ENCODE measurements at regions of chr11 and their contacts with region 1.

Region 1: GRCh38 chr11:59171508-59172322 is at the start of gene DTX4:
- DNase-seq: peak; percentile 96
- H3K4me3 ChIP-seq: peak within 1 kb of the TSS; percentile 40 to 73 (median 58)
- H3K27ac ChIP-seq: peak within 1 kb of the TSS; percentile 56 to 75 (median 66)
- H3K4me1 ChIP-seq: peaks cover 0 to 20% (median 16%) of the 10 kb centered on the region in 4 donors
- H3K27me3 ChIP-seq: no peaks in the 10 kb centered on the region
- CTCF ChIP-seq: peak; percentile 77 to 91 (median 87)
- EP300 ChIP-seq: no peak
- POLR2A ChIP-seq: no peak
- total RNA-seq, gene DTX4: 3.5 to 7.8 (median 4.1) TPM

Region 2: GRCh38 chr11:59106363-59107336 is 65.1 kb before region 1 on chr11 and contains the start of gene FAM111B:
- intact Hi-C with region 1: no loop called
- DNase-seq: peak; percentile 91
- H3K4me3 ChIP-seq: peak within 1 kb of the TSS; percentile 42 to 54 (median 48)
- H3K27ac ChIP-seq: peak within 1 kb of the TSS in 3 of 4 donors; percentile 41 to 50 (median 46)
- H3K4me1 ChIP-seq: peaks cover 0 to 24% (median 21%) of the 10 kb centered on the region in 4 donors
- H3K27me3 ChIP-seq: peaks cover 0 to 10% (median 9%) of the 10 kb centered on the region in 3 donors
- CTCF ChIP-seq: no peak
- EP300 ChIP-seq: no peak
- POLR2A ChIP-seq: no peak
- total RNA-seq, gene FAM111B: 0.27 to 0.36 TPM in 2 of 4 donors, not detected in the others

Region 3: DNA sequence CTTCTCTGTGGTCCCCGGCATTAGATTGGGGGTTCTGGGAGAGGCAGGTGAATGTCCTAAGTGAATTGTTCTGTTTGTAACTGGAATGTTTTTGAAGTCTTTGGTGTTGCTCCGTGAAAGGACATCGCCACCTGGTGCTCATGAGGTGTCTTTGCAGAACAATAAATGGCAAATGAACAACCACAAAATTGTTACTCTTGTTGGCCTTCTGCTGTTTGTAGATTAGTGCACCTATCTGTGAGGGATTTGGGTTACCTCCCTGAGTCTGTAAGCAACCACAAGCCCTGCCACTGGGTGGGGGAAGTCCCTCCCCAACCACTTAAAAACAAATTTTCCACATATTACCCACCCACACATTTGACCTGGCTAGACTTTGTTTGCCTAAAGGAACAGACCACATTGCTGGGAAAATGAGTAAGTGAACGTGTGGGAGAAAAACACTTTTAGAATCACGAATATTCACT is 36.3 kb after region 1 on chr11:
- intact Hi-C with region 1: loop called (anchors 1 kb)
- DNase-seq: no peak
- H3K4me3 ChIP-seq: peak overlapping the region in 1 of 4 donors; percentile 26
- H3K27ac ChIP-seq: peak overlapping the region in 1 of 4 donors; percentile 25
- H3K4me1 ChIP-seq: no peaks in the 10 kb centered on the region
- H3K27me3 ChIP-seq: no peaks in the 10 kb centered on the region
- CTCF ChIP-seq: peak; percentile 32 to 70 (median 63)
- EP300 ChIP-seq: no peak
- POLR2A ChIP-seq: no peak

Region 4: DNA sequence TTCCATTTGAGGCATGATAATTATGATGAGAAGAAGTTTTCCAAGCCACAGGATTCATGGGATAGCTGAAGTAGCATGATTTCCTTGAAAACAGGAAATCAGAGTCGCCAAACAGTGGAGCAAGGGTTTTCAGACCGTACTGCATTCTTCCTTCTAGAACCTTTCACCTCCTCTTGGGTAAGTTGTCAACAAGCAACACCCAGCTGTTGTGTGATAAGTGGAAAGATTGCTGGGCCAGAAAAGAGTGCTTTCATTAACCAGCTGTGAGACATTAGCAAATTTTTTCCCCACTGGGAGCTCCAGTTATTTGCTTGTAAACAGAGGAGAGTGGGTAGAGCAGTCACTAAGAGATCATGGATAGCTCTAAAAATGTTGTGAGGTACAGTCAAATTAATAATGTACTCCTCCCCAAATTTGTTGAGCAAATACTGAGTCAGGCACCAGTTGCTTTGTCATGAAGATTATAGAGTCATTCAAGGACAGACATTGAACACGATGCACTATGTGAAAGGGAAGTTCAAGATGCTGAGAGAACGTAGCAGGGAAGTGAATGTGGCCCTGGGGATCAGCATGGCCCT is 52.7 kb after region 1 on chr11:
- intact Hi-C with region 1: no loop called
- DNase-seq: peak; percentile 73
- H3K4me3 ChIP-seq: no peak overlapping the region
- H3K27ac ChIP-seq: peak overlapping the region; percentile 46 to 68 (median 64)
- H3K4me1 ChIP-seq: no peaks in the 10 kb centered on the region
- H3K27me3 ChIP-seq: no peaks in the 10 kb centered on the region
- CTCF ChIP-seq: no peak
- EP300 ChIP-seq: no peak
- POLR2A ChIP-seq: no peak

Region 5: GRCh38 chr11:59283825-59284772 is 112.4 kb after region 1 on chr11:
- intact Hi-C with region 1: loop called (anchors 1 kb)
- DNase-seq: no peak
- H3K4me3 ChIP-seq: no peak overlapping the region
- H3K27ac ChIP-seq: no peak overlapping the region
- H3K4me1 ChIP-seq: no peaks in the 10 kb centered on the region
- H3K27me3 ChIP-seq: no peaks in the 10 kb centered on the region
- CTCF ChIP-seq: peak; percentile 51 to 78 (median 62)
- EP300 ChIP-seq: no peak
- POLR2A ChIP-seq: no peak

Region 6: DNA sequence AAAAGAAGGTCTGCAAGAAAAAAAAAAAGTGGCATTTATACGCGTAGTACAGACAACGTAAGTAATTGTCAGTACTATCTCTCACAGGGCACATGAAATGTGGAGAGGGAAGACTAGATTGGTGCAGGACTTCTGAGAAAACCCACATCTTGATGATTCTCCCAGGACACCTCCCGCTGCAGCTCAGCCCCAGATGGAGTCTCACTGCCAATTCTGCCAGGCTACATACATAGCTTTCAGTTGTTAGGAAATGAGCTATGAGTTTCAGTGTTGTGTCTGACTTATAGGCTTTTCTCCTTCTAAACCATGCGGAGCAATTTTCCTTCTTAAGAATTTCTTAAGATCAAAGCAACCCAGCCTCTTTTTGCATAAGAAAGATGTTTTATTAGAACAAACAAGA is 244.9 kb after region 1 on chr11:
- intact Hi-C with region 1: no loop called
- DNase-seq: no peak
- H3K4me3 ChIP-seq: no peak overlapping the region
- H3K27ac ChIP-seq: no peak overlapping the region
- H3K4me1 ChIP-seq: no peaks in the 10 kb centered on the region
- H3K27me3 ChIP-seq: no peaks in the 10 kb centered on the region
- CTCF ChIP-seq: no peak
- EP300 ChIP-seq: no peak
- POLR2A ChIP-seq: no peak

Region 7: GRCh38 chr11:59680287-59681154 is 508.8 kb after region 1 on chr11:
- intact Hi-C with region 1: loop called (anchors 10 kb)
- DNase-seq: peak; percentile 83
- H3K4me3 ChIP-seq: no peak overlapping the region
- H3K27ac ChIP-seq: no peak overlapping the region
- H3K4me1 ChIP-seq: no peaks in the 10 kb centered on the region
- H3K27me3 ChIP-seq: no peaks in the 10 kb centered on the region
- CTCF ChIP-seq: peak; percentile 58 to 73 (median 64)
- EP300 ChIP-seq: no peak
- POLR2A ChIP-seq: no peak

Region 8: GRCh38 chr11:59833602-59834001 is 661.9 kb after region 1 on chr11:
- intact Hi-C with region 1: no loop called
- DNase-seq: no peak
- H3K4me3 ChIP-seq: no peak overlapping the region
- H3K27ac ChIP-seq: no peak overlapping the region
- H3K4me1 ChIP-seq: no peaks in the 10 kb centered on the region
- H3K27me3 ChIP-seq: no peaks in the 10 kb centered on the region
- CTCF ChIP-seq: no peak
- EP300 ChIP-seq: no peak
- POLR2A ChIP-seq: no peak

Measured in sigmoid colon (tissue), 7 donors.